ENCODE measurements at regions of chr10 and their contacts with region 1.

Region 1: GRCh38 chr10:11260170-11260569 is 242.5 kb downstream of the CELF2 start:
- DNase-seq: no peak
- ATAC-seq: no peak

Region 2: DNA sequence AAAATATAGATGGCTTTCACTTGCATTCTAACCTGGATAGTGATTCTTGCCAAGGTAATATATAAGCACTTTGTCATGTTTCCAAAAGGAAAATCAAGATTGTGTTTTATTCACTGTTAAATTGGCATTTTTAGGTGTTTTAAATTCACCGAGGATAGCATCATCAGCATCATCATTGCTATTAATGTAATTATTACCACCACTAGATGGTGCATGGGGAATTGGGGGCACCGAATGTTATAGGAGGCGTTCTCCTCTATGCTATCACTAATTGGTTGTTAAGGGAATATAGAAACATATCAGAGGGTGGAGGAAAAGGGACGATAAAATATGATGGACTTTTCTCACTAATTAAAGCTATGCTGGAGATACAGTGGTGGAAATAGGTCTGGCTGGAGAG is 147.0 kb before region 1 on chr10:
- intact Hi-C with region 1: loop called in 1 of 2 experiments (anchors 10 kb)
- DNase-seq: no peak
- ATAC-seq: no peak

Measured in left colon (tissue), 2 donors.